GM10248 (cell line): ENCODE measurements at regions of chr2 and their contacts with region 1.

Region 1: GRCh38 chr2:98465456-98466226 is 21.0 kb downstream of the INPP4A start:
- DNase-seq: no peak
- CTCF ChIP-seq: no peak

Region 2: GRCh38 chr2:98455494-98455976 is 10.1 kb before region 1 on chr2:
- CTCF ChIA-PET with region 1: interaction called, 26 read pairs
- POLR2A ChIA-PET with region 1: interaction called, 12 read pairs
- DNase-seq: peak; percentile 41
- CTCF ChIP-seq: no peak

Region 3: DNA sequence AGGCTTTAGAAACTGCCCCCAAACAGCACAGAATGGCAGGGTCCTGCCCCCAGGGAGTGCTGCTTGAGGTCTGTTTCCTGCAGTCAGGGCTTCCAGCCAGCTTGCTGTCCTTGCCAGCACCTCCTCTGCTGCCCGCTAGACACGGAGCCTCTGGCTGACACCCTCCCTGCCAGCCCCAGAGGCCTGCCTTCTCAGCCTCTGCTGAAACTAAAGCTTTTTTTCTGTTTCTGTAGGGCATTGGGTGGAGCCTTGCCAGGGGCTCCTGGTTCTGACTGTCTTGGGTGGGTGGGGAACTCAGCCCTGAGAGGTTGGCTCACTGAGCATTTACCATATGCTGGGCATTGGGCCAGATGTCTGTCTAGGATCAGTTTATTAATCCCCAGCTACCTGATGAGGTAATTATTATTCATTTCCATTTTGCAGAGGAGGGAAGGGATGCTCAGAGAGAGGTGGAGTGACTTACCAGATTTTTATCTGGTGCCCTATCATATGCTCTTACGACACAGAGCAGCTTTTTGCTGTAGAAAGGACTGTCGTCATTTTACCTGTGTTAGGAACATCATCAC is 14.4 kb after region 1 on chr2:
- CTCF ChIA-PET with region 1: interaction called, 21 read pairs
- POLR2A ChIA-PET with region 1: interaction called, 18 read pairs
- DNase-seq: no peak
- CTCF ChIP-seq: no peak